ENCODE measurements at regions of chr17 and their contacts with region 1.

Region 1: DNA sequence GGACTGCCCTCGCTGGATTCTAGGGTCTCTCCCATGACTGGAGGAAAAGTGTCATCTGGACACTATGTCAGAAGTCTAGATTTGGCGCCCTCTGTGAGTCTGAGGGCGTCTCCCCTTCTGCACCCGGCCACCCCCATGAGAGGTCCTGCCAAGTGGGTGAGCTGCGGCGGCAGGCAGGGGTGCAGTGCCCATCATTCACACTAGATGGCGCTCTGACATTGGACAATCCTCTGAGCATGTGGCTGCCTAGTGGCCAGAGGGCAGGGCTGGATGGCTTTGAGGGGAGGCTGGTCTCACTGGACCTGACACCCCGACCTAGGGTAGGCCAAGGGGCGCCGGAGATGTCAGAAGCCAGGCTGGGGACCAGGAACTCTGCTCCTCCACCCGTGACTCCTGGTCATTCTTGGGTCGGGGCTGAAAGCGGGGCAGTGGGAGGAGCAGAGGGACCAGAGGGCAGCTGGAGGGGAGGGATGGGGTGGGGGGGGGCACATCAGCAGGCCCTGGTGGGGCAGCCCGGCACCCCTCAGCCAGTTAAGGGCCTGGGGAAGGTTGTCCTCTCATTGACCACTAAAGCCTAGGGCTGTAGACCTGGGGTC is 28.0 kb downstream of the MRM1 start:
- DNase-seq: peak; percentile 53 to 87 (median 70)
- ATAC-seq: peak; percentile 96
- H3K4me3 ChIP-seq: no peak overlapping the region
- H3K27ac ChIP-seq: no peak overlapping the region
- H3K4me1 ChIP-seq: no peaks in the 10 kb centered on the region
- H3K27me3 ChIP-seq: peaks cover 2 to 22% of the 10 kb centered on the region in 2 donors
- CTCF ChIP-seq: peak; percentile 97 to 98

Region 2: GRCh38 chr17:36731811-36732210 is 102.5 kb after region 1 on chr17:
- intact Hi-C with region 1: no loop called
- DNase-seq: no peak
- ATAC-seq: no peak
- H3K4me3 ChIP-seq: no peak overlapping the region
- H3K27ac ChIP-seq: no peak overlapping the region
- H3K4me1 ChIP-seq: no peaks in the 10 kb centered on the region
- H3K27me3 ChIP-seq: peaks cover 23 to 83% of the 10 kb centered on the region in 2 donors
- CTCF ChIP-seq: no peak

Region 3: DNA sequence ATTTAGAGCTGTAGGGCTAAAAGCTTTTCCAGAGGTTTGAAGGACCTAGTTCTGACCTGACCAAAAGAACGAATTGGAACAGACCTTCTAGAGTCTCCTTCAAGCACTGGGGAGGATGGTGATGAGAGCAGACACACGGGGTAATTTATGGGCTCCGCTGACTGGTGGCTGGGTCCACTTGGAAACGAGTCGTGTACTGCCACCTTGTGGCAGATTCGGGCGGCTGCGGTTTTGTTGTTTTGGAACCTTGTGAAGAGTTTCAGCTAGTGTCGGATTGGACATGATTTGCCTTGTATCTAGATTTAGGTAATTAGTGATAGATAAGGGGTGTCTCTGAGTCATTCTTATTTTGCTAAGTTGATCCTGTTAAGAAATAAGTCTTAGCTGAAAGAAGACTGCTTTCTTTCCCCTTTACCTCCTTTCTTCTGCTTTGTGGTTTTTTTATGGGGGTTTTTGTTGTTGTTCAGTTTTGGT is 418.3 kb after region 1 on chr17:
- intact Hi-C with region 1: loop called in 1 of 2 experiments (anchors 5 kb)
- DNase-seq: peak; percentile 69 to 87 (median 78)
- ATAC-seq: peak; percentile 92
- H3K4me3 ChIP-seq: no peak overlapping the region
- H3K27ac ChIP-seq: no peak overlapping the region
- H3K4me1 ChIP-seq: no peaks in the 10 kb centered on the region
- H3K27me3 ChIP-seq: no peaks in the 10 kb centered on the region
- CTCF ChIP-seq: peak; percentile 82 to 83

Measured in left lung (tissue), 14 donors.